ENCODE measurements at regions of chr17 and their contacts with region 1.

Region 1: GRCh38 chr17:11900041-11900476 is 97.2 kb downstream of the ZNF18 start:
- DNase-seq: no peak
- H3K4me3 ChIP-seq: no peak overlapping the region
- H3K27ac ChIP-seq: no peak overlapping the region
- H3K4me1 ChIP-seq: no peaks in the 10 kb centered on the region
- H3K27me3 ChIP-seq: no peaks in the 10 kb centered on the region
- CTCF ChIP-seq: no peak
- EP300 ChIP-seq: no peak
- POLR2A ChIP-seq: no peak

Region 2: GRCh38 chr17:11823862-11824261 is 76.2 kb before region 1 on chr17:
- in situ Hi-C with region 1: loop called in 1 of 4 experiments (anchors 25 kb)
- intact Hi-C with region 1: no loop called
- DNase-seq: no peak
- H3K4me3 ChIP-seq: no peak overlapping the region
- H3K27ac ChIP-seq: no peak overlapping the region
- H3K4me1 ChIP-seq: peaks cover 0 to 3% (median 0%) of the 10 kb centered on the region in 4 donors
- H3K27me3 ChIP-seq: no peaks in the 10 kb centered on the region
- CTCF ChIP-seq: no peak
- EP300 ChIP-seq: no peak
- POLR2A ChIP-seq: no peak

Region 3: DNA sequence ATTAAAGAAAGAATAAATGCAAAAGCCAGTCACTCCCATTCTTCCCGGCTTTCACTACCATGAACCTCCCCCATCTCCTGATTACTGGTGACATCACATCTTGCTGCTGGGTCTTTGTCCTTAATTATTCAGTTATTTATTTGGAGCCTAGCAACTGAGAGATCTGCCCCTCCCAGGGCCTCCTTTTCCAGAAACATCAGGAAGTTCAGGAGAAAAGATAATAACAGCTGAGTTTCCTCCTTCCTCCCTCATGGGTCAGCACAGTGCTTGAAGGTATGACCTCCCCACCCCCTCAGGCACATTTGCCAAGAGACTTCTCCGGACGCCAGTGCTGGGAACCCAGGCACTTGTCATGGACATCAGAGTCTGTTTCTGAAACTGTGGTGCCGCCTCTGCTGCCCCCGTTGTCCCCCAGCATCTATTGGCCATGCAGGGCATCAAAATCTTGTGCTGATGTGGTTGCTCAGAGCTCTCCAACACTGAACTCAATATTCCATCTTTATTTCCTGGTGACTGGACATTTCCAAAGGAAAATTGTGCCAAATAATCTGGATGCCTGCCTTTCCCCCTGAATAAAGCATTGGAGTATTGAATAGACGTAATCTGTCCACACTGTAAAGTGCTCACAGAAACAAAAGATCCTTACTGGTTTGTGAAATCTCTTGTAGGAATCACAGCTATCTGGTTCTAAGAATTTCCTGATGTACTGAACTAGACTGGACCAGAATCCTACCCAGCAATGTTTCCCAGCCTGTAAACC is 25.4 kb after region 1 on chr17:
- in situ Hi-C with region 1: no loop called
- intact Hi-C with region 1: no loop called
- DNase-seq: no peak
- H3K4me3 ChIP-seq: no peak overlapping the region
- H3K27ac ChIP-seq: no peak overlapping the region
- H3K4me1 ChIP-seq: no peaks in the 10 kb centered on the region
- H3K27me3 ChIP-seq: no peaks in the 10 kb centered on the region
- CTCF ChIP-seq: no peak
- EP300 ChIP-seq: no peak
- POLR2A ChIP-seq: no peak

Region 4: DNA sequence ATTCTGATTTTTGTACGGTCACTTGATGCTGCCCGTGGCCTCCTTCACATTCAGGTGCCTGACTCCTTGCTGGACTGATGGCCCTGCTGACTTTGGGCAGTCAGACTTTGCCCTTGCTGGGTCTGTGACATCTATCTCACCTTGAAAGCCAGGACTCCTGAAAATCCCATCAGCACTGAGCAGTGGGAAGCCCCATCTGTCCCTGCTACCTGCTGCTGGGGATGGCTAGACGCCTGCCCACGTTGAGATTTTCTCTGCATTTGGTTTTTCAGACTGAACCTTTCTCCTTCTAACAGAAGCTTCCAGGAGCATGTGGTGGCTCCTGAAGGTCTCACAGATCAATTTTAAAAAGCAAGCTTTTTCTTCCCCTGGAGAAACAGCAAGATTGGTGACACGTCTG is 107.4 kb after region 1 on chr17:
- in situ Hi-C with region 1: no loop called
- intact Hi-C with region 1: no loop called
- DNase-seq: no peak
- H3K4me3 ChIP-seq: no peak overlapping the region
- H3K27ac ChIP-seq: no peak overlapping the region
- H3K4me1 ChIP-seq: no peaks in the 10 kb centered on the region
- H3K27me3 ChIP-seq: no peaks in the 10 kb centered on the region
- CTCF ChIP-seq: no peak
- EP300 ChIP-seq: no peak
- POLR2A ChIP-seq: no peak

Region 5: DNA sequence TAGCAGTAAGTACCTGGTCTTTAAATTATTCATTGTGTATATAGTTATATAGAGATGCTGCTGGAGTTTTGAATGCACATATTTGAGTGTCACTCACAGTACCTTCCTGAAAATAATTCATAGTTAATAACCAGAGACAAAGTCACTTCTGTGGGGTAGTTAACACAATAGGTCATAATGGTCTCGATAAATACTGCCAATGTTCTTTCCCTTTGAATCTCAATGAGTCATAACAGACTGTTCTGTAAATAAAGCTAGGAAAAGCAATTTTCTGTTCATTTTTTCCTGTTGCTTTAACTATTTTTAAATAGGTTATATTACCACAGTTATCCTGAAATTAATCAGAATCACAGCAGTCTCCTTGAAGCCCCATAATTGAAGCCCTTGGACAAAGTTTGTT is 207.8 kb after region 1 on chr17:
- in situ Hi-C with region 1: no loop called
- intact Hi-C with region 1: no loop called
- DNase-seq: no peak
- H3K4me3 ChIP-seq: no peak overlapping the region
- H3K27ac ChIP-seq: no peak overlapping the region
- H3K4me1 ChIP-seq: peaks cover 0 to 3% (median 0%) of the 10 kb centered on the region in 4 donors
- H3K27me3 ChIP-seq: no peaks in the 10 kb centered on the region
- CTCF ChIP-seq: no peak
- EP300 ChIP-seq: no peak
- POLR2A ChIP-seq: no peak